ENCODE measurements at regions of chr20 and their contacts with region 1.

Region 1: GRCh38 chr20:37282556-37282955 is 6.9 kb upstream of the MANBAL start:
- DNase-seq: no peak
- H3K4me3 ChIP-seq: no peak overlapping the region
- H3K27ac ChIP-seq: no peak overlapping the region
- H3K4me1 ChIP-seq: no peaks in the 10 kb centered on the region
- H3K27me3 ChIP-seq: no peaks in the 10 kb centered on the region
- CTCF ChIP-seq: no peak

Region 2: GRCh38 chr20:37384683-37385174 is 102.2 kb after region 1 on chr20:
- intact Hi-C with region 1: loop called (anchors 5 kb)
- DNase-seq: peak; percentile 55
- H3K4me3 ChIP-seq: peak overlapping the region; percentile 40
- H3K27ac ChIP-seq: no peak overlapping the region
- H3K4me1 ChIP-seq: peaks cover 5% of the 10 kb centered on the region
- H3K27me3 ChIP-seq: no peaks in the 10 kb centered on the region
- CTCF ChIP-seq: peak; percentile 92